ENCODE measurements at regions of chr6 and their contacts with region 1.

Region 1: DNA sequence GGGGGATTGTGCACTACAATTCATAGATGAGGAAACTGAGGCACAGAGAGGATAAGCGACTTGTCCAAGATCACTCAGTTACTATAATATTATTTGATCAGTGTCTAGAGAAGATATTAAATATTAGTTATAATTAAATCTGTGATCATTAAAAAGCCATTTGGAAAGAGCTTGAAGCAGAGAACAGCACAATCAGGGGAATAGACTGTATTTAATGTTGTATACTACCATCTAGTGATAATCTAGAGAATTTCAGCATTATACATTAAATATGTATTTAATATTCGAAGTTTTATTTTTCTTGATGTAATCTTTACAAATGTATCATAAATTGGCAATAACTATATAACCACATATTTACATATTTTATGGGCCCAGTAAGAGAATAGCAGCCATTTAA is 20.1 kb upstream of the MTCL3 start:
- DNase-seq: peak in 2 of 3 donors; percentile 52 to 54
- H3K4me3 ChIP-seq: no peak overlapping the region
- H3K27ac ChIP-seq: no peak overlapping the region
- H3K4me1 ChIP-seq: no peaks in the 10 kb centered on the region
- H3K27me3 ChIP-seq: peaks cover 2 to 10% (median 6%) of the 10 kb centered on the region in 5 experiments

Region 2: DNA sequence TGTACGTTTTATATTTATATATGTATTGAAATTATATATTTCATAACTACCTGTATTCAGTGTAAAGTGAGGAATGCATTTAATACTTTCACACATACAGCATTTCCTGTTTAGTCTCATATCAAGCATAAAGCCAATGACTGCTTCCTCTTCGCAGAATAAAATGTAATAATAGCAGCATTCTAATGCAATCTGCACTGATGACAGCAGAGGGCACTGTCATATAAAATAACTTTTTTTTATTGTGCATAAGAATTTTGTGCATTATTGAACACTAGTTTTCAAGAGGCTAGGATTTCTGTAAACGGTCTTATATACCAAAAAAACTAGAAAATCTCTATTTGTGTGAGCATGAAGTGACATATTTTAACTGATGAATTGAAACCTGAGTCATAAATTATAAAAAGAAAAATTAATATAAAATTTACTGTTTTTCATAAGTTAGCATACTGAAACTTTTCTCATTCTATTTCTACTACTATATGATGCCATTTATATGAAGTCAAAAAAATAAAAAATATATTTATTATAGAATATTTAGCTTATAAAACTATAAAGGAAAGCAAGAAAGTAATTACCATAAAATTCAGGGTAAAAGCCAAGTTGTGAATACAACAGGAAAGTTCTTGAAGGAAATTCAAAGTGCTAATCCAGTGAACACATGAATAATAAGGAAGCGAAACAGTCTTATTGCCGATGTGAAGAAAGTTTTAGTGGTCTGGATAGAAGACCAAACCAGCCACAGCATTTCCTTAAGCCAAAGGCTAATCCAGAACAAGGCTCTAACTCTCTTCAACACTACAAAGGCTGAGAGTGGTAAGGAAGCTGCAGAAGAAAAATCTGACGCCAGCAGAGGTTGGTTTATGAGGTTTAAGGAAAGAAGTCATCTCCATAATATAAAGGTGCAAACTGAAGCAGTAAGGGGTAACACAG is 236.3 kb before region 1 on chr6:
- CTCF ChIA-PET with region 1: interaction called, 11 read pairs
- POLR2A ChIA-PET with region 1: no interaction called
- DNase-seq: peak; percentile 58 to 83 (median 81)
- H3K4me3 ChIP-seq: no peak overlapping the region
- H3K27ac ChIP-seq: no peak overlapping the region
- H3K4me1 ChIP-seq: no peaks in the 10 kb centered on the region
- H3K27me3 ChIP-seq: no peaks in the 10 kb centered on the region

Region 3: GRCh38 chr6:127434651-127435050 is 104.6 kb before region 1 on chr6:
- CTCF ChIA-PET with region 1: no interaction called
- POLR2A ChIA-PET with region 1: no interaction called
- DNase-seq: no peak
- H3K4me3 ChIP-seq: no peak overlapping the region
- H3K27ac ChIP-seq: no peak overlapping the region
- H3K4me1 ChIP-seq: no peaks in the 10 kb centered on the region
- H3K27me3 ChIP-seq: no peaks in the 10 kb centered on the region

Region 4: GRCh38 chr6:127464881-127465459 is 74.3 kb before region 1 on chr6:
- CTCF ChIA-PET with region 1: interaction called, 27 read pairs
- POLR2A ChIA-PET with region 1: no interaction called
- DNase-seq: peak; percentile 53 to 72 (median 65)
- H3K4me3 ChIP-seq: no peak overlapping the region
- H3K27ac ChIP-seq: no peak overlapping the region
- H3K4me1 ChIP-seq: peaks cover 0 to 2% (median 0%) of the 10 kb centered on the region in 4 experiments
- H3K27me3 ChIP-seq: no peaks in the 10 kb centered on the region

Region 5: GRCh38 chr6:127471379-127472255 is 67.7 kb before region 1 on chr6:
- CTCF ChIA-PET with region 1: interaction called, 27 read pairs
- POLR2A ChIA-PET with region 1: no interaction called
- DNase-seq: no peak
- H3K4me3 ChIP-seq: no peak overlapping the region
- H3K27ac ChIP-seq: no peak overlapping the region
- H3K4me1 ChIP-seq: no peaks in the 10 kb centered on the region
- H3K27me3 ChIP-seq: peaks cover 0 to 13% (median 0%) of the 10 kb centered on the region in 5 experiments